Psoas muscle (tissue), 8 donors: ENCODE measurements at regions of chr6 and their contacts with region 1.

Region 1: DNA sequence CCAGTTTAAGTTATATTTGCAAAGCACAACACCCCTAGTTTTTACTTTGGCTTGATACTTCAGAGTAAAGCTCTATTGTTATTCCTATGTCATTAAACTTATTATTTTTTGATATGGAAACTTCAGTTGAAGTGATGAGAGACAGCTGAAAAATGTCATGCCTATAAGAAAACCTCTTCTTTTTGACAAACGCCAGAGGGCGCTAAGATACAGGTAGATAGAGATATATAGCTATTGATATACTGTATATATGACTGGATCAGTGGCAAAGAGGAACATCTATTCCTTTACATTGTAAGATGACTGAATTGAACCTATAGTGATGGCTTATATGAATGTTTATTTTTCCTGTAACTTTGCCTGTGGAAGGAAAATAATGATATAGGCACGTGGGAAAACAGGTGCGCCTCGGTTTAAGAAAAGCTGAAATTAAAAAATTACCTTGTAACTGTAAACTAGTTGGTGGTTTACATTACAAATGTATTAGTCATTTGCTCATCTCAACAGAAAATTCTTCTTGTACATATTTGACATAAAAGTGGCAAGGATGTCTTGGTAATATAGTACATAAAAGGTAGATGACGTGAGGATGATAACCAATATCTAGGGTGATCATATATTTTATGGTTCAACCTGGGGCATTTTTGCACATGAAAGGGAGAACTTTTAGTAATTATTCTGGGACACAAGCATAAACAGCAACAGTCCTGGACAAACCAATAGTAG is 74.1 kb downstream of the LAMA4 start:
- DNase-seq: no peak
- ATAC-seq: peak in 1 of 4 donors; percentile 74
- H3K4me3 ChIP-seq: no peak overlapping the region
- H3K27ac ChIP-seq: no peak overlapping the region
- H3K4me1 ChIP-seq: no peaks in the 10 kb centered on the region
- H3K27me3 ChIP-seq: peaks cover 0 to 6% (median 0%) of the 10 kb centered on the region in 3 donors
- CTCF ChIP-seq: peak; percentile 70

Region 2: DNA sequence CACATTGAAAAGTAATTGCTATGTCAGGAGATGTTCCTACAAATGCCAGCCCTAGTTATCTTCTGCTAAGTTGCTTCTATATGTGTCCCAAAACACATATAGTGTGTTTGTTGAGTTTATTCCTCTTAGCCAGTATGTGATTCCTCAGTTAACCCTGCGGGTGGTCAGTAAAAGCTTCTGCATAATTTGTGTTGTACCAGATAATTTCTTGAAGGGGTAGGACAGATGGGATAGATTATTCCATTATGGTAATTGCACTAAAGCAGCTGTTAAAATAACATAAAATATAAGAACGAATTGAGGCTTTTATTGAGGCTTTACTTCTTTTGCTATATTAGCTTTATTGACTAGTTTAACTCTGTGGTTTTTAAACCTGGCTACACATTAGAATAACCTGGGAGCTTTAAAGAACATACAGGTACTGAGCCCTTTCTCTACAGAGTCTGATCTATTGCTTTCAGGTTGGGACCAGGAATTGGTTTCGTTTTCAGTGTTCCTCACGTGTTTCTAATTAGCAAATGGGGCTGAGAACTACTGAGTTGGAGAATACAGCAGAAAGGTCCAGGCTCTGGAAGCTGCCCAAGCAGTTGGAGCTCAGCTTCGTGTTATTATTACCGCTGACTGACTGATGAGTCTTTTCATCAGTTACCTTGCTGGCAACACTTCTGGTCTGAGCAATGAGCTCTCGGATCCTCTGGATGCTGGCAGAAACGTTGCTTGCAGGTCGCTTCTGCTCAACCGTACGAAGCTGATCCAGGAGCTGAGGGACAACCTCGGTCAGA is 35.9 kb before region 1 on chr6:
- intact Hi-C with region 1: no loop called
- DNase-seq: no peak
- ATAC-seq: no peak
- H3K4me3 ChIP-seq: no peak overlapping the region
- H3K27ac ChIP-seq: no peak overlapping the region
- H3K4me1 ChIP-seq: no peaks in the 10 kb centered on the region
- H3K27me3 ChIP-seq: no peaks in the 10 kb centered on the region
- CTCF ChIP-seq: no peak

Region 3: DNA sequence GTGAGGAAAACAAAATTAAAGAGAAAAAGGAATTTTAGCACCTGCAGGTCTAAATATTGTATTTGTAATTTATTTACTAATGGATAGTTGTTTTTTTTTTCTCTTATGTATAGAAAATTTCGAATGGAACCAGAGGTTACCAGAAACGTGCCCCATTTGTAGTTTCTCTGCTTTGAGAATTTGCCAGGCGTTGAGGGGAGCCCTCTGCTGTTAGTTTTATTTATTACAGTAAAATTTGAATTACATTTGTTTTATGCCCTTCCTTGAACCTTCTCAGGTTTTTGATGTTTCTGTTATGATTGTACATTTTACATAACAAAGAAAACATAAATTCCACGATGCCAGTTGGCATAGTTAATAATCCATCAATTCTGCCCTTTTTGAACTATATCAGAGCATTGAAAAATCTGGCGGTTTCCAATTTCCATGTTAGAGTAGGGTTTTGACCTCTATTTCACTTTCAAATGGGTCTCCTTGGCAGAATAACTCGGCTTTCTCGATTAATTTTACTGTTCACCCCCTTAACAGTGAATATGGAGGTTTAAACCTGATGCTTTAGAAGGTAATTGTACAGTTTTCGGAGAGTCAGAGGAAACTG is 131.8 kb after region 1 on chr6:
- intact Hi-C with region 1: loop called (anchors 1 to 5 kb)
- DNase-seq: no peak
- ATAC-seq: peak in 1 of 4 donors; percentile 55
- H3K4me3 ChIP-seq: no peak overlapping the region
- H3K27ac ChIP-seq: no peak overlapping the region
- H3K4me1 ChIP-seq: peaks cover 5% of the 10 kb centered on the region
- H3K27me3 ChIP-seq: no peaks in the 10 kb centered on the region
- CTCF ChIP-seq: peak; percentile 70